Uterus (tissue), 4 donors: ENCODE measurements at regions of chr4 and their contacts with region 1.

Region 1: DNA sequence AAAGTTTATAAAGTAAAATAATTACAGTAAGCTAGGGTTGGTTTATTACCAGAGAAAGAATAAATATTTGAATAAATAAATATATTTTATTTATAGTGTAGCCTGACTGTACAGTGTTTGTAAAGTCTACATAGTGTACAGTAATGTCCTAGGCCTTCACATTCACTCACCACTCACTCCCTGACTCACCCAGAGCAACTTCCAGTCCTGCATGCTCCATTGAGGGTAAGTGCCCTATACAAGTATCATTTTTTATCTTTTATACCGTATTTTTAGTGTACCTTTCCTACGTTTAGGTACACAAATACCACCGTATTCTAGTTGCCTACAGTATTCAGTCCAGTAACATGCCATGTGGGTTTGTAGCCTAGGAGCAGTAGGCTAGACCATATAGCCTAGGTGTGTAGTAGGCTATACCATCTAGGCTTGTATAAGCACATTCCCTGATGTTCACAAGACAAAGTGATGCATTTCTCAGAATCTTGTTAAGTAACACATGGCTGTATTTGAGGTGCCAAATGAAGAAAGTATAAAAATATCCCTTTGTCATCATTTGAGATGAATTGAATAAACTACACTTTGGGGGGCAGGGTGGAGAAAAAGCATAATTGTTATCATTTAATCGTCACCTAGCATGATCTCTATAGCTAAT is 14.7 kb upstream of the KLHL8 start:
- DNase-seq: no peak
- H3K4me3 ChIP-seq: peak overlapping the region; percentile 38 to 39
- H3K27ac ChIP-seq: peak overlapping the region; percentile 63 to 81
- H3K4me1 ChIP-seq: peaks cover 0 to 3% of the 10 kb centered on the region in 2 donors
- H3K27me3 ChIP-seq: no peaks in the 10 kb centered on the region
- CTCF ChIP-seq: no peak
- POLR2A ChIP-seq: no peak

Region 2: GRCh38 chr4:86927843-86928395 is 307.2 kb before region 1 on chr4:
- intact Hi-C with region 1: loop called (anchors 5 kb)
- DNase-seq: peak; percentile 74 to 91
- H3K4me3 ChIP-seq: no peak overlapping the region
- H3K27ac ChIP-seq: peak overlapping the region; percentile 30 to 85
- H3K4me1 ChIP-seq: peaks cover 0 to 9% of the 10 kb centered on the region in 2 donors
- H3K27me3 ChIP-seq: no peaks in the 10 kb centered on the region
- CTCF ChIP-seq: no peak
- POLR2A ChIP-seq: no peak

Region 3: GRCh38 chr4:87150498-87151261 is 84.5 kb before region 1 on chr4:
- intact Hi-C with region 1: loop called (anchors 10 kb)
- DNase-seq: peak in 1 of 2 donors; percentile 76
- H3K4me3 ChIP-seq: no peak overlapping the region
- H3K27ac ChIP-seq: peak overlapping the region; percentile 18 to 66
- H3K4me1 ChIP-seq: peaks cover 0 to 11% of the 10 kb centered on the region in 2 donors
- H3K27me3 ChIP-seq: no peaks in the 10 kb centered on the region
- CTCF ChIP-seq: peak; percentile 84 to 89 (median 86)
- POLR2A ChIP-seq: no peak